ENCODE measurements at regions of chr1 and their contacts with region 1.

Region 1: DNA sequence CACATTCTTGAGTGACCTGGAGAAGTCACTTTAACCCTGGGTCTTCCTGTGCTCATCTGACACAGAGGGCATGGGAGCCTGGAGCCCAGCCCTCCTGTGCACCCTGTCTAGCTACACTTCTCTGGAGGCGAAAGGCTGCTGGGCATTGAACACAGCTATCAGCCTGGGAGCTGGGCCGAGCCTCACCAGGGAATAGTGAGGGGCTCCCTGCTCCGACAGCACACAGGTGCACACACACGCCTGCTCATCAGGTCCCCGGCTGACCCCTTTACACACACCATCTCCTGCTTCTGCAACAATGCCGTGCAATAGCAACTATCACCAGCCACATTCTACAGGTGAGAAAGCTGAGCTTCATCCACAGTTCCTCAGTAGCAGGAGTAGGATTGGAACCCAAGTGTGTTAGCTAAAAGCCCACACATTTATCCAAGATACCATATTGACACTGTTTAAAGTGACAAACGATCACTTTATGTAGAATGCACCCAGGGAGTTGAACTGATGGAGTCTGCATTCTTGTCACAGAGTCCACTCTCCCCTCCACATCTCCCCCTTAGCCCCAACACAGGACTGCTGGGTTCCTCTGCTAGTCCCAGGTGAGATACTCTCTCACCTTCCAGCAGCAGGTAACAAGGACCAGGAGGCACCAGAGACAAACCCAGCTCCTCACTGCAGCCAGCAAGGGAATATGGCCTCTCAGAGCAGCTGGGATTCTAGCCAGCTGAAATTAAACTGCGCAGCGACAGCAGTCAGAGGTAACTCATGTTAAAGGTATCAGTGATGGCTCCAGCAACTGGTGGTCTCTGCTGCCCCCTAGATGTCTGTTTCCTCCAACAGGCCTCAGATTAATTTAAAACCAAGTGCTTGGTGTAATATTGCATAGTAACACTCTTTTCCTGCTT is 18.3 kb upstream of the CAPN8 start:
- DNase-seq: peak; percentile 66
- H3K4me3 ChIP-seq: no peak overlapping the region
- H3K27ac ChIP-seq: no peak overlapping the region
- H3K4me1 ChIP-seq: no peaks in the 10 kb centered on the region
- H3K27me3 ChIP-seq: no peaks in the 10 kb centered on the region
- CTCF ChIP-seq: peak; percentile 49 to 67 (median 56)
- EP300 ChIP-seq: no peak
- POLR2A ChIP-seq: no peak

Region 2: DNA sequence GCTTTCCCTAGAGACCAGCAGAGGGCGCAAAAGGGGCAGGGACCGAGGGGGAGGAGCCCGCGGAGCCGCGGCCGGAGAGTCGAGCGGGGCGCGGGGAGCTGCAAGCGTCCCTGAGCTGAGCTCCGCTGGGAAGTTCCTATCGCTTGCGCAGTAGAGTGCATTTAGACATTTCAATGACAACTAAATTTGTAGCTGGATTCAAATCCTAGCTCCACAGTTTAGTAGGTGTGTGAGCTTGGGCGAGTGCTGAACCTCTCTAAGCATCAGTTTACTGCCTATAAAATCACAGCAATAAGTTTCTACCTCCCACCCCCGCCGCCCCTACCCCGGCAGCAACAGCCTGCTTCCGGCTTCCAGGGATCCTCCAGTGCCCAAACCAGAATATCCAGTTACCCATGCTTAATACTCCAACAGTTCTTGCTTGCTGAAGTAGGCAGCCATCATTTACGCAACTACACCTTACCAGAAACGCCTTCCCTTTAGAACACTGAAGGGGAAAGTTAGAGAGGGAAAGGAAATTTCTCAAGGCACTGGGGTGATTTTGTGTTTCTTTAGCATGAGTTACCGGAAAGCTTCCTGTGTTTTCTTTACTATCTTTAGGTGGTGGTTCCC is 549.9 kb before region 1 on chr1:
- in situ Hi-C with region 1: loop called in 1 of 4 experiments (anchors 10 kb)
- intact Hi-C with region 1: no loop called
- DNase-seq: peak; percentile 87
- H3K4me3 ChIP-seq: peak overlapping the region; percentile 16 to 47 (median 26)
- H3K27ac ChIP-seq: peak overlapping the region; percentile 60 to 79 (median 74)
- H3K4me1 ChIP-seq: peaks cover 7 to 32% (median 18%) of the 10 kb centered on the region in 4 donors
- H3K27me3 ChIP-seq: no peaks in the 10 kb centered on the region
- CTCF ChIP-seq: peak; percentile 91 to 97 (median 97)
- EP300 ChIP-seq: no peak
- POLR2A ChIP-seq: no peak

Region 3: DNA sequence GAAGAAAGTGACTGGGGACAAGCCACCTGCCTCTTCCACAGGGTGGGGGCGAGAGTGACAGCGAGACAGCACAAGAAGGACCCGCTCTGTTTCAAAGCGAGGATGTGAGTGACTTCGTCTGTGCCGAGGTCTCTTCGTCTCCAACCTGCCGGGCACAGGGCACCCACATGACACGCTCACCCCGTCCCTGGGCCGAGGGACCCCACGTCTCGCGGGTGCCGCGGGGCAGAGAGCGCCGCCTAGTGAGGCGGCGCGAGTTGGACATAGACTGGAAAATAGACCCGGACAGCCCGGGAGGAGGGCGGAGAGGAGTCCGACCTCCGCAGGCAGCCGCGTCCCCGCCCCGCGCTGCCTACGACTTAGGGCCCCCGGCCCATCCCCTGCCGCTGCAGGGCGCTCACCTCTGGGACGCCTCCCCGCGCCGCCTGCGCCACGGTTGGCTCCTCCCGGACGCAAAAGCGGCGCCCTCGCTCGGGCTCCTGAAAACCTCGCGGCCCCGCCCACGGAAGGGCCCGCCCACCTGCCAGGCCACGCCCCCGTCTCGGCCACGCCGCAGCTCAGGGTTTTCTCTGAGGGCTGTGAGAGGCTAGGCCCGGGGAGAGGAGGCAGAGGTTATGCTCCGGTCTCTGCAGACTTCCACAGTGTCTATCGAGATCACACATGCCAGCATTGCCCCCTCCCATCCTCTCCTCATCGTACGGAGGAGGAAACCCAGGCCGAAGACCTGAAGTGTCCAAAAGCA is 540.9 kb before region 1 on chr1 and contains the start of gene TLR5:
- in situ Hi-C with region 1: loop called in 1 of 4 experiments (anchors 10 kb)
- intact Hi-C with region 1: loop called (anchors 10 kb)
- DNase-seq: peak; percentile 94
- H3K4me3 ChIP-seq: peak within 1 kb of the TSS; percentile 46 to 69 (median 55)
- H3K27ac ChIP-seq: peak within 1 kb of the TSS; percentile 62 to 71 (median 64)
- H3K4me1 ChIP-seq: peaks cover 4 to 23% (median 22%) of the 10 kb centered on the region in 4 donors
- H3K27me3 ChIP-seq: no peaks in the 10 kb centered on the region
- CTCF ChIP-seq: peak; percentile 65 to 75 (median 72)
- EP300 ChIP-seq: no peak
- POLR2A ChIP-seq: no peak
- total RNA-seq, gene TLR5: 1.9 to 9.4 (median 3.8) TPM in 3 of 4 donors, not detected in the other

Region 4: DNA sequence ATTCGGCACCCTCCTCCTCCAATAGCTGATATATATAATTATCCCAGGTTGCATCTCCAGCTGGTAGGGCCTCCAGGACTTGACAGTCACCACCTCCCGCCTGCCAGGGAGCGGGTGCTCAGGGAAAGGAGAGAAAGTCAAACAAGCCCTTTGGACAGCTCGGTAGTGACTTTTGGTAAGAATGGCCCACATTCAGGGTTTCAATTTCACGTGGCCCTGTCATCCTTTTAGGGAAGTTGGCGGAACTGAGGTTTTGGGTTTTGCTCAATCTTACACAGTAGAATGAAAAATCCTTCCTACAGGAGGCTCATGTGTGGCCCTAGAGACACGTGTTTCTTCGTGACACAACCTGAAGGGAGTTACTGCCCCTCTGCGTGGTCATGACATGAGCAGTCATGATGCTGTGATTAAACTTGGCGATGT is 62.5 kb before region 1 on chr1:
- in situ Hi-C with region 1: no loop called
- intact Hi-C with region 1: no loop called
- DNase-seq: no peak
- H3K4me3 ChIP-seq: no peak overlapping the region
- H3K27ac ChIP-seq: no peak overlapping the region
- H3K4me1 ChIP-seq: no peaks in the 10 kb centered on the region
- H3K27me3 ChIP-seq: no peaks in the 10 kb centered on the region
- CTCF ChIP-seq: no peak
- EP300 ChIP-seq: no peak
- POLR2A ChIP-seq: no peak

Region 5: GRCh38 chr1:223765036-223765718 is 81.3 kb after region 1 on chr1:
- in situ Hi-C with region 1: no loop called
- intact Hi-C with region 1: no loop called
- DNase-seq: peak; percentile 17
- H3K4me3 ChIP-seq: no peak overlapping the region
- H3K27ac ChIP-seq: peak overlapping the region in 2 of 4 donors; percentile 7 to 36
- H3K4me1 ChIP-seq: no peaks in the 10 kb centered on the region
- H3K27me3 ChIP-seq: no peaks in the 10 kb centered on the region
- CTCF ChIP-seq: no peak
- EP300 ChIP-seq: no peak
- POLR2A ChIP-seq: no peak